ENCODE measurements at regions of chr7 and their contacts with region 1.

Region 1: GRCh38 chr7:29345600-29345999 is 151.0 kb downstream of the CHN2 start:
- DNase-seq: peak in 1 of 2 donors; percentile 28
- ATAC-seq: peak in 1 of 4 donors; percentile 61
- H3K4me3 ChIP-seq: no peak overlapping the region
- H3K27ac ChIP-seq: no peak overlapping the region
- H3K4me1 ChIP-seq: no peaks in the 10 kb centered on the region
- H3K27me3 ChIP-seq: no peaks in the 10 kb centered on the region
- CTCF ChIP-seq: peak; percentile 41

Region 2: DNA sequence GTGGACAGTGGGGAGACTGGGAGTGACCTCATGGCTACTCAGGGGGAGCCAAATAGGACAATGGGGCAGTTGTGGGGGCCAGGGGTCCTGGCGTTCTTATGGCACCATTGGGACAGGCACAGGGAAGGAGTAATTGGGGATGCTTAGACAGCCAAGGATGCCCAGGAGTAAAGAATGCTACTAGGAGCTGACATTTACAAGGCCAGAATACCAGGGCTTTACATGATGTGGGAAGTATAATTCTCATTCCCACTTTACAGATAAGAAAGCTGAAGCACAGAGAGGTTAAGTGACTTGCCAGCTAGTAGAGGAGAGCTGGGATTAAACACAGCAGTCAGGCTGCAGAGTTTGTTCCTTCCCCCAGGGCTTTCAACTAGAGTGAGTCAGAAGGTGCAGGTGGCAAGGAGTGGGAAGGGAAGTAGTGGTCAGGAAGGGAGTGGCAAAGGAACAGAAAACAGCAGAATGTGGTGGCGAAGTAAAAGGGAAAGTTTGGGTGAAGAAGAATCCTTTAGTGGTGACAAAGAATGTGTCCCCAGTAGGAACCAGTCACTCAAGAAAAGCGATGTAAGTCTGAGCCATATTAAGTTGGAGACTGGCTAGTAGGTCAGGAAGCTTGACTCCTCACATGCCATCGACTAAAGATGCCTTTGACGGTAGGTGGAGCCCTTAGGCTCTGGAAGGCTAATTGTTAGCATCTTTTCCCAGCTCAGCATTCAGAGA is 232.1 kb before region 1 on chr7:
- intact Hi-C with region 1: loop called in 1 of 2 experiments (anchors 5 kb)
- DNase-seq: no peak
- ATAC-seq: peak in 3 of 4 donors; percentile 32 to 50 (median 49)
- H3K4me3 ChIP-seq: no peak overlapping the region
- H3K27ac ChIP-seq: no peak overlapping the region
- H3K4me1 ChIP-seq: no peaks in the 10 kb centered on the region
- H3K27me3 ChIP-seq: no peaks in the 10 kb centered on the region
- CTCF ChIP-seq: peak; percentile 35

Region 3: GRCh38 chr7:29189743-29190201 is 155.8 kb before region 1 on chr7:
- intact Hi-C with region 1: loop called in 1 of 2 experiments (anchors 5 kb)
- DNase-seq: peak; percentile 55 to 67
- ATAC-seq: peak; percentile 53 to 67 (median 60)
- H3K4me3 ChIP-seq: no peak overlapping the region
- H3K27ac ChIP-seq: no peak overlapping the region
- H3K4me1 ChIP-seq: peaks cover 4% of the 10 kb centered on the region
- H3K27me3 ChIP-seq: peaks cover 0 to 2% (median 0%) of the 10 kb centered on the region in 3 donors
- CTCF ChIP-seq: peak; percentile 65

Region 4: DNA sequence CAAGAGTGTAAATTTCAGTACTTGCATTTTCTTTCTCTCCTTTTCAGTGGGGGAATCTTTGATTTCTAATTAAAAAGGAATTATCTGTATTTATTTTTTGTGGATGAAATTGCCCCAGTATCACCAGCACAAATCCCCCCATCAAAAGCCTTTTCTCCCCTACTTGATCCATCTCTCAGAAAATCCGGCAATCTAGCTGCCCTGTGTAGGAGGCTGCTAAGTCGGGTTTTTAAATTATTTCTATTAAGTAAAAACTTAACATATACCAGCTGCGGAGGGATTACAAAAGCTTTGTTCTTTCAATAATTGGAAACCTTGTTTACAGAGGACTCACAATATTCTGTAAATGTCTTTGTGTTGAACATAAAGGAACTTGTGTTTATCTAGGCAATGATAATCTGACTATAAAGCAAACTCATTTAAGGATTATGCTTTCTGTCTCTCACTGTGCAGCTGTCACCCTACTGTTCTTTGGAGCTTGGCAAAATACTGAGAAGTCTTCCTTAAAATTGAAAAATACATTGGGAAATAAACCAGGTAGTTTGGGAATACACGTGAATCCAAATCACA is 40.7 kb after region 1 on chr7:
- intact Hi-C with region 1: no loop called
- DNase-seq: no peak
- ATAC-seq: no peak
- H3K4me3 ChIP-seq: no peak overlapping the region
- H3K27ac ChIP-seq: no peak overlapping the region
- H3K4me1 ChIP-seq: no peaks in the 10 kb centered on the region
- H3K27me3 ChIP-seq: no peaks in the 10 kb centered on the region
- CTCF ChIP-seq: no peak

Region 5: DNA sequence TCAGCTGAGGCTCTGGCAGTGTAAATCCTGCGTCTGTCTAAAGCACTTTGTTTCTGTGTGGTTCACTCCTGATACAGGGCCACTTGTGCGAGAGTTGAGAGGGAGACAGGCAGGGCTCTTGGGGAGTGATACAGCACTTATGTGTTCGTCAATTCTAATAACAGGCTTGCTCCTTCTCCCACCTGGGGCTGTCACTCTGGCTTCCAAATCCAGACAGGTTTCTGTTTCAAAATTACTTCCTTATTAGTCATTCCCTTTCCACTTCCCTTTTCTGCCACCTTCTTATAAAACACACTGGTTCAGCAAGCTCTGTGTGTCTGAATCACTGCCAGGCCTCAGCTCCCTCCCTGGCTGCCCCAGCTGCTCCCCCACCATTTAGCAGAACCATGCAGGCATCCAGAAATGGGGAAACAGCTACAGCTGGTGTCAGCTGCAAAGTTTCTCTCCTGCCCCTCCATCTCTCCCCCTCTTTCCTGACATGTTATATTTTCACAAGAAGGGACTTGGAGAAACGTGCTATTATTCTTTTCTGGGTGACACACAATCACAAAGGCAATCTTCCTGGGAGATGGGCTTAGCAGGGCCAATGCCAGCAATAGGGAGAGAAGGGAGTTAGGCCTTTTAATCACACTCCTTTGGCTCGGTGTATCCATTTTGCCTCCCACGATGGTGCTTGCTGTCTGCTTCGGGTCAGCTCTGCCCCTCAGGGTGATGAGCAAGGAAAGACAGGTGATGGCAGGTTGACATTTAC is 880.4 kb after region 1 on chr7:
- intact Hi-C with region 1: no loop called
- DNase-seq: peak; percentile 67 to 87
- ATAC-seq: peak; percentile 96 to 98 (median 96)
- H3K4me3 ChIP-seq: peak overlapping the region; percentile 17
- H3K27ac ChIP-seq: peak overlapping the region; percentile 95
- H3K4me1 ChIP-seq: peaks cover 24% of the 10 kb centered on the region
- H3K27me3 ChIP-seq: no peaks in the 10 kb centered on the region
- CTCF ChIP-seq: no peak